CD4-positive, alpha-beta memory T cell (primary cell): ENCODE measurements at regions of chr3 and their contacts with region 1.

Region 1: DNA sequence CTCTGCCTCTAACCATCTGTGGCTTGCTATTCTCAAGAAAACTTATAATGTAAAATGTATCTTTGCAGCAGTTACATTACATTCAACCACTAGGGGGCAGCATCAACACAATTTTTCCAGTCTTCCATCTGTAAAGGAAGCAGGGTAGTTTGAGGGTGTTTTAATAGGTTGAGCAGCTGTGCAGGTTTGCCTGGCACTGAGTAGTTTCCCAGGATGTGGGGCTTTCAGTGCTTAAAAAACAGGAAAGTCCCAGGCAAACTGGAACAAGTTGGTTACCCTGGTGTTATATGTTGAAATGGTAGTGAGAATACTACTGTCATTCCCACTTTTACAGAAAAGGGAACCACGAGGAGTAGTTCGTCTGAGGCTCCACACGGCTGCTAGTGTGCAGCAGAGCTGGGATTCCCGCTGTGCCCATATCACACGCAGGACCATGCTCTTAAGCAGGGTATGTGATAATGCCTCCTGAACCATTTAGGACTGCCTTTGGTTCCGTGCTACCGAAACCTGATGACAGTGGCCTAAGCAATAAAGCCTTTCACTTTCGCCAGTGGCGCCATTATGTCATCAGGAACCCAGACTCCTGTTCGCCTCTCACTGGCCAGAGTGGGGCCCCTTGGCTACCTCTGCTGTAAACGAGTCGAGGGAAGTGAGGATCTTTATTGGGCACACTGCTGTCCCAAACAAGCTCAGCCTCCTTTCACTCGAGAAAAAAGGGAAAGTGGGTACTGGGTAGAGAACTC is 64.7 kb upstream of the ZBTB38 start:
- DNase-seq: peak; percentile 69 to 79 (median 76)
- H3K4me3 ChIP-seq: no peak overlapping the region
- H3K4me3 Mint-ChIP-seq: no peak overlapping the region
- H3K27ac ChIP-seq: no peak overlapping the region
- H3K27ac Mint-ChIP-seq: peak overlapping the region in 2 of 7 donors; percentile 7 to 25
- H3K4me1 ChIP-seq: peaks cover 39% of the 10 kb centered on the region
- H3K4me1 Mint-ChIP-seq: peaks cover 27 to 50% (median 45%) of the 10 kb centered on the region in 4 donors
- H3K27me3 ChIP-seq: no peaks in the 10 kb centered on the region
- H3K27me3 Mint-ChIP-seq: no peaks in the 10 kb centered on the region

Region 2: GRCh38 chr3:140753865-140754754 is 549.5 kb before region 1 on chr3:
- CTCF ChIA-PET with region 1: no interaction called
- POLR2A ChIA-PET with region 1: no interaction called
- intact Hi-C with region 1: no loop called
- DNase-seq: no peak
- H3K4me3 ChIP-seq: no peak overlapping the region
- H3K4me3 Mint-ChIP-seq: no peak overlapping the region
- H3K27ac ChIP-seq: no peak overlapping the region
- H3K27ac Mint-ChIP-seq: no peak overlapping the region
- H3K4me1 ChIP-seq: no peaks in the 10 kb centered on the region
- H3K4me1 Mint-ChIP-seq: peaks cover 0 to 1% (median 0%) of the 10 kb centered on the region in 4 donors
- H3K27me3 ChIP-seq: no peaks in the 10 kb centered on the region
- H3K27me3 Mint-ChIP-seq: peaks cover 0 to 8% of the 10 kb centered on the region in 2 donors

Region 3: DNA sequence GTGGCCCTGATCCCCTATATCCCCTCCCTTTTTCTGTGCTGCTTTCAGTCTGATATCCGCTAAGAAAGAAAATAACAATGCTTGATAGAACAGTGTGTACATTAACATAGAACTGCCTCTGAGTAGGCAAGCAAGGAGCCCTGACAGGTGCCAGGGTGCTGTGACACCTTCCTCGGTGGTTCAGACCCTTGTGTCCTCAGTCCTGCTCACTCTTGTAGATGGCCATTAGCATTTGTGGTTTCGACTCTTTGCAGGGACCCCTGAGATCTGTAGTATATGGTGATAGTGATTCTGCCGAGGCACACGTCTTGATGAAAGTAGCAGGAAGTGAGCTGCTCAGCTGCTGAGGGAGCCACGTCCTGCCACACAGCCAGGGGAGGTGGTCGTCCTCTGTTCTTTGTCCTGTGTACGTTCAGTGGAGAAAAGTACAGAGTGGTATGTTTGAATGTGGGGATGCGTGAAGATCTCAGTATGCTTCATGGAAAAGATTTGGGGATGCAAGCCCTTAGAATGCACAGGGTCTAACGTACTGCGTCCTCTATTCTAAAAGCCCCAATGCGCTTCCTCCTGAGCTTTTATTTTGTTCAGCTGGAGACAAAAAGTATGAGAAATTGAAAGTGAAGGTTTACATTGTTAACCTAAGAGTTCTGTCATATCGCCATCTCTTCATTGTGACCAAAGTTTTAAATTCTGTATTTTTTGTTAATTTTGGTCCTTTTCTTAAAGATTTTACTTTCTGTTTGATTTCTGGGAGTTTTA is 36.7 kb before region 1 on chr3:
- CTCF ChIA-PET with region 1: interaction called, 19 read pairs
- POLR2A ChIA-PET with region 1: interaction called, 26 read pairs
- intact Hi-C with region 1: no loop called
- DNase-seq: peak; percentile 51 to 68 (median 58)
- H3K4me3 ChIP-seq: peak overlapping the region; percentile 54 to 66
- H3K4me3 Mint-ChIP-seq: peak overlapping the region; percentile 88 to 99 (median 92)
- H3K27ac ChIP-seq: peak overlapping the region; percentile 73
- H3K27ac Mint-ChIP-seq: peak overlapping the region; percentile 85 to 98 (median 96)
- H3K4me1 ChIP-seq: peaks cover 27% of the 10 kb centered on the region
- H3K4me1 Mint-ChIP-seq: peaks cover 17 to 57% (median 29%) of the 10 kb centered on the region in 4 donors
- H3K27me3 ChIP-seq: no peaks in the 10 kb centered on the region
- H3K27me3 Mint-ChIP-seq: no peaks in the 10 kb centered on the region

Region 4: GRCh38 chr3:141360888-141361598 is 57.4 kb after region 1 on chr3:
- CTCF ChIA-PET with region 1: interaction called, 68 read pairs
- POLR2A ChIA-PET with region 1: interaction called, 14 read pairs
- intact Hi-C with region 1: loop called (anchors 1 kb)
- DNase-seq: peak in 4 of 5 donors; percentile 46 to 60 (median 50)
- H3K4me3 ChIP-seq: no peak overlapping the region
- H3K4me3 Mint-ChIP-seq: peak overlapping the region in 6 of 8 donors; percentile 11 to 69 (median 50)
- H3K27ac ChIP-seq: no peak overlapping the region
- H3K27ac Mint-ChIP-seq: peak overlapping the region in 2 of 7 donors; percentile 7 to 39
- H3K4me1 ChIP-seq: peaks cover 10% of the 10 kb centered on the region
- H3K4me1 Mint-ChIP-seq: peaks cover 3 to 8% (median 7%) of the 10 kb centered on the region in 4 donors
- H3K27me3 ChIP-seq: no peaks in the 10 kb centered on the region
- H3K27me3 Mint-ChIP-seq: peaks cover 2 to 5% of the 10 kb centered on the region in 2 donors

Region 5: DNA sequence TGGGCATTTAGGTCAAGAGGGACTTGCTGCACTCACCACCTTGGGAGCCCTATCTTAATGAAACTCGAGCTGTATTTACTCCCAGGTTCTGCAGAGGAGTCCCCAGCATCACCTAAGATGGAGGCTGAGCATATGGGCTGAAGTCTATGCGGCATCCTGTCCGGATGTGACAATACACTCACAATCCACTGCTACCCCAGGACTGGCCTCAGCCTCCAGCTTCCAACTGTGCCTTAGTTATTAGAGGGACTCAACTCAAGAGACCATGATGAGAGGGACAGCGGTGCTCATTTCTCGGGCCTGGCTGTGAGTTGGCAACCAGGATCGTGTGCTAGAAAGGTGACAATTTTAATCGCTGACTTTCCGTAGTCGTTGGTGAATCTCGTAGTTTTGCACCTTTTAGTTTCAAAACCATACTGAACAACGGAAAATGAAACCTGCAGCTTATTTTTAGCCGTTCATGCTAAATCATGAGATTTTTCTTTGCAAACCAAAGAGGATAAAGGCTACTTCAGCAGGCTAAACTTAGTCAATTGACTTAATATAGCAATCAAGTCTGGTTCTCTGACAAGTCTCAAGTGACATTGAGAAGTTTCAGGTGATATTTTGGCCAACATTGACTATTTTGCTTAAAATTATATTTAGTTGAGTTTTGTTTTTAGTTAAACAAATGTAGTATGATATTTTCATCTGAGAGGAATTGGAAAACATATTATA is 75.8 kb after region 1 on chr3:
- CTCF ChIA-PET with region 1: interaction called, 5 read pairs
- POLR2A ChIA-PET with region 1: interaction called, 11 read pairs
- intact Hi-C with region 1: no loop called
- DNase-seq: peak; percentile 30 to 50 (median 44)
- H3K4me3 ChIP-seq: peak overlapping the region in 1 of 2 donors; percentile 18
- H3K4me3 Mint-ChIP-seq: peak overlapping the region; percentile 49 to 86 (median 74)
- H3K27ac ChIP-seq: peak overlapping the region; percentile 33
- H3K27ac Mint-ChIP-seq: peak overlapping the region; percentile 85 to 97 (median 96)
- H3K4me1 ChIP-seq: peaks cover 51% of the 10 kb centered on the region
- H3K4me1 Mint-ChIP-seq: peaks cover 29 to 47% (median 39%) of the 10 kb centered on the region in 4 donors
- H3K27me3 ChIP-seq: no peaks in the 10 kb centered on the region
- H3K27me3 Mint-ChIP-seq: no peaks in the 10 kb centered on the region

Region 6: DNA sequence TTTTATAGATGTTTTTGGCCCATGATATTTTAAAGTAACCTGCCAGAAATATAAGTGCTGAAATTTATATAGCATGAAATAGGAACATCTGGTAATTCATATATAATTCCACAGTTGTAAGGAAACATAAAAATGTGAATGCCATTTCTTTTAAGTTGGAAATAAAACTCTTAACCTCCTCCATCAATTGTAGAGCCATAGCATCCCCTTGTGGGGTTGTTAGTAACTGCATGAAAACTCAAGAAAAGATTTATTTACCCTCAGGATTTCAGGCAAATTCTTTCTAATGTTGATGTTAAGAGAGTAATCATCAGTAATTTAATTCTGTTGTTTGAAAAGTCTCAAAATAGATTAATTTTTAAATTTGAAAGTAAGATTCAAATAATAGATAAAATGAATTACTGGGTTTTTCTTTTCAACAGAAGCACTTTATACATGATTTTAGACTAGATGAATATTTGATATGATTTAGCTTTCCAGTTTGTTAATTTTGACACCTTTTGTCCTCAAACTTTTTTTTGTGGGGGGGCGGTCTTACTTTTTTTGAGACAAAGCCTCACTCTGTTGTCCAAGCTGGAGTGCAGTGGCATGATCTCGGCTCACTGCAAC is 257.9 kb after region 1 on chr3:
- CTCF ChIA-PET with region 1: interaction called, 17 read pairs
- POLR2A ChIA-PET with region 1: interaction called, 3 read pairs
- intact Hi-C with region 1: loop called (anchors 2 kb)
- DNase-seq: peak; percentile 55 to 73 (median 70)
- H3K4me3 ChIP-seq: no peak overlapping the region
- H3K4me3 Mint-ChIP-seq: no peak overlapping the region
- H3K27ac ChIP-seq: no peak overlapping the region
- H3K27ac Mint-ChIP-seq: peak overlapping the region in 6 of 7 donors; percentile 35 to 85 (median 78)
- H3K4me1 ChIP-seq: peaks cover 33% of the 10 kb centered on the region
- H3K4me1 Mint-ChIP-seq: peaks cover 15 to 22% (median 20%) of the 10 kb centered on the region in 4 donors
- H3K27me3 ChIP-seq: no peaks in the 10 kb centered on the region
- H3K27me3 Mint-ChIP-seq: no peaks in the 10 kb centered on the region